AG04450 (cell line): ENCODE measurements at regions of chr9 and their contacts with region 1.

Region 1: DNA sequence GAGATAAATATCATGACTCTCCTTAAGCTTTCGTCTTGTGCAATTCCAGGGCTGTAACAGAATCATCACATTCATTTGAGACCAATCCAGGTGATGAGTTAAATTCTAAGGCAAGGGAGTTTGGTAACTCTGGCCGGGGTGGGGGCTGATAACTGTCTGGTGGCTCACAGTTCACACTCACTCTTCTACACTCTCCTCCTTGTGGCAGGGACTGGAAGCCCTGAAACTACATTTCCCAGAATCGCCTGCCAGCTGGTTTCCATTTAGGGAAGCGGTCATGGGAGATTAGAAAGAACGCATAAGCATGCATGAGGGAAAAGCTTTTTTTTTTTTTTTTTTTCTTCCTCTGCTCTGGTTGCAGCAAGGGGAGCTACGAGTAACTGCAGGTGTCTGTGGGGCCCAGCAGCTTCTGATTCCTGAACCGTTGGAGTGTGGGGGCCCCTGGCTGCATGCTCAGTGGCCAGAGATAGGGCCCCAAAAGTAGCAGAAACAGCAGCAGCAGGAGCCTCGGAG is 154.8 kb upstream of the TBC1D2 start:
- DNase-seq: peak; percentile 73
- H3K4me3 ChIP-seq: no peak overlapping the region
- H3K27ac ChIP-seq: no peak overlapping the region
- H3K27me3 ChIP-seq: no peaks in the 10 kb centered on the region
- CTCF ChIP-seq: peak; percentile 73

Region 2: GRCh38 chr9:98315551-98316060 is 94.6 kb before region 1 on chr9:
- CTCF ChIA-PET with region 1: interaction called, 13 read pairs
- POLR2A ChIA-PET with region 1: no interaction called
- DNase-seq: peak; percentile 67
- H3K4me3 ChIP-seq: no peak overlapping the region
- H3K27ac ChIP-seq: no peak overlapping the region
- H3K27me3 ChIP-seq: no peaks in the 10 kb centered on the region
- CTCF ChIP-seq: peak; percentile 94